Head of caudate nucleus (tissue), 42 donors: ENCODE measurements at regions of chr1 and their contacts with region 1.

Region 1: DNA sequence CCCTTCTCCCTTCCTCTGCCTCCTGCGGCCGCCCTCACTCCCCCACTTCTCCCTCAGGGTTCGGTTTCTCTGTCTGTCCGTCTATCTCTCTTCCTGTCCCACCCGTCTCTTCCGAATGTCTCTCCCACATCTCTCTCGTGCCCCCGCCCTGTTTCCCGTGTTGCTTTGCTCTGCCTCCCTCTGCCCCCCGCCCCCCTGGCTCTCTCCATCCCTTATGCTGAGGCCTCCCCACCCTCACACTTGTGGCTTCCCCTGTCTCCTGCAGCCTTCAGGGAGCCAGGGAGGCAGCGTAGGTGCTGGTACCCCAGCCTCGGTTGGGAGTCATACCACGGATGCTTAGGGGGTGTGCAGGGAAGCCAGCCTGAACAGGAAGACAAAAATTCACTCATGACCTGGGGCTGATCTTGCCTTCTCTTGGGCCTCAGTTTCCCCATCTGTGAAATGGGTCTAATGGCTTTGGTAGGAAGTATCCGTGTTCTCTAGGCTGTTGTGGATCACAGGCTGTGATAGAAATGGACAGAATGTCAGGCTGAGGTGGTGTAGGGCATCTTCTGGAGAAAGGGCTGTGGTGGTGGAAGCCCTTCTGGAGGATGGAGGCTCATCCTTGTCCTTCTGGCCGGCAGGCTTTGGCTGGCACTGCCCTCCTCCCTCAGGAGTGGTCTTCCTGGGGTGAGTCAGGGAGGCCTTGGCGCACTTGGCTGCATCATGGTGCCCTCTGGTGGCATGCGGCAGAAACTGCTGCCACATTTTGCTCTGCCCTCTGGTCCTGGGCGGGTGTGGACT is 55.5 kb downstream of the FOXO6 start:
- DNase-seq: peak in 41 of 42 donors; percentile 56 to 87 (median 69)

Region 2: DNA sequence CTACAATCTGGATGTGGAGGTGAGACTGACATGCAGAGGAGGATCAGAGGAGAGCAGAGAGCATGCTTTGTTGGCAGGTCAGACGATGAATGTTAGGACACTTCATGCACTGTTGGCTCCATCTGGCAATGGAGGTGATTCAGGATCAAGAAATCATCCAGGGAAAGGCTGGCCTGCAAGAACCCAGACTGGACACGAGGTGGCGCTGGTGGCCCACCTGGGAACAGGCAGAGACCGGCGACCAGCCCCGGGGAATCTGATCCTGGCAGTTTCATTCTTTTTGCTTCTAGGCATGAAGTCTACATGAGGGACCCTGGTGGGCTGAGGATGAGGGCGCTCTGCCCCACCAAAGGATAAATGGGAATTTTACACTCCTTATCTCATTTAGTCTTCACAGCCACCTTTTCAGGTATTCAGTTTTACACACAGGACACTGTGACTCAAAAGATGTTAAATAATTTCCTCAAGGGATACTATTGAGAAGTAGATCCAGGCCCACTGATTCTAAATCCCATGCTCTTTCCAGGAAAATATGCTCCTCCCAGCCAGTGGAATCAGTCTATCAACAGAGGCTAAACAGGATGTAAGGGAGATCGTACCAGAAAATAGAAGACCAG is 148.5 kb before region 1 on chr1:
- intact Hi-C with region 1: loop called (anchors 5 kb)
- DNase-seq: peak; percentile 75 to 93 (median 85)

Region 3: DNA sequence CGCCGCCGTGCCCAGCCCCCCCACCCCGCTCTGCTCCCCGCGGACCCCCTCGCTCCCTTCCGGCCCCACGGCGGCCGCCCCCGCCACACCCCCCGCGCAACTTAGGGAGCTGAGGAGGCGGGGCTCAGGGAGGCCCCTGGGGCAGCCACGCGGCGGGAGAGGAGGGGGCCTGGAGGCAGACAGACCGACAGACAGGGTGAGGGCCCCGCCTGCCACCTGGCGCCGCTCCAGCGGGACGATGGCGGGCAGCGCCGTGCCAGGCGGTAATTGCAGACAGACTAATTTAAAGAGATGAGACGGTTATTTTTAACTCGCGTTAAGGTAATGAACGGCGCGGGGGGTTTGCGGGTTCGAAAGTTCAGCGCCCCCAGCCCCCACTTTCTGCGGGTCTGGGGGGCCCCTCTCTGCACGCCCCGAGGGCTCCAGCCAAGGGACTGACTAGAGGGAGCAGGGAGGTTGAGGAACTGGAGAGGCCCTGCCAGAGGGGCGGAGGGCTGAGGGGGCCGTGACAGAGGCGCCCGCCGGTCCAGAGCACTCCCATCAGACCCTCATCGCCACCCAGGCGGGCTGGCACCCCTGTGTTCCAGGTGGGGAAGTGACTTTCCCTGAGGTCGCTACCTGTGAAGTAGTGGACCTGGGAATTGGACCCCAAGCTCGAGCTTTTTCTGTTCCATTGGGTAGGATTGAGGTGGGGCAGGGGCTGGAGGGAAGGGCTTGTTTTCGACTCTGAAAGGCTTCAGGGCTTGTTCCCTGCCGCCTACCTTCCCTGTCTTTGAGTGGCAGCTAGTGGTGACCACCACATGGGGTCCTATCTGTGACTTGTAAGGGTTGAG is 50.1 kb before region 1 on chr1:
- intact Hi-C with region 1: loop called (anchors 5 kb)
- DNase-seq: peak in 29 of 42 donors; percentile 31 to 78 (median 56)

Region 4: DNA sequence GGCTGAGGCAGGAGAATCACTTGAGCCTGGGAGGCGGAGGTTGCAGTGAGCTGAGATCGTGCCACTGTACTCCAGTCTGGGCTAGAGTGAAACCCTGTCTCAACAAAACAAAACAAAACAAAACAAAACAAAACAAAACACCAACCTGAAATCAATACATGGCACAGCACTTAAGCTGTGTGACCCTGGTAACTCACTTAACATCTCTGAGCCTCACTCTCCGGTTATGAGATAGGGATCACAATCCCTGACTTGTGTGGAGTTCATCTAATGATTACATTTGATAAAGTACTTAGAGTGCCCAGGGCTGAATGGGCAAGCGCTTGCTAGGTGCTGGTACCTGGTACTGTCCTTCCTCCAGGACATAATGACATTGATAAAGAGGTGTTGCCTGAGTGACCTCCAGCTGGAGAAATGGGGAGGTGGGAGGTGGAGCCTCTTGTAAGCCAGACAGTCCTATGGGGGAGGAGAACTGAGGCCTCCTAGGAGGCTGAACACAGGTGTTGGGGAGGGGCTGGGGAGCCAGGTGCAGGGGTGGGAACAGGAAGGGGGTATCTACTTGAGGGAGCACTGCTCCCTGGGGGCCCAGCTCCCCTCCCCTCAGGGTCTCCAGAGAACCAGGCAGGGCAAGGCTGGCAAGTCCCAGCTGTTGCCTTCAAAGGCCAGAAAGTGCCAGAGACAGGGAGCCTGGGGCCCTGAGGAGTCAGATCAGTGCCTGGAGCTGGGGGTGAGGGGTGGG is 37.6 kb before region 1 on chr1:
- intact Hi-C with region 1: no loop called
- DNase-seq: no peak